PC-9 (cell line): ENCODE measurements at regions of chr3 and their contacts with region 1.

Region 1: DNA sequence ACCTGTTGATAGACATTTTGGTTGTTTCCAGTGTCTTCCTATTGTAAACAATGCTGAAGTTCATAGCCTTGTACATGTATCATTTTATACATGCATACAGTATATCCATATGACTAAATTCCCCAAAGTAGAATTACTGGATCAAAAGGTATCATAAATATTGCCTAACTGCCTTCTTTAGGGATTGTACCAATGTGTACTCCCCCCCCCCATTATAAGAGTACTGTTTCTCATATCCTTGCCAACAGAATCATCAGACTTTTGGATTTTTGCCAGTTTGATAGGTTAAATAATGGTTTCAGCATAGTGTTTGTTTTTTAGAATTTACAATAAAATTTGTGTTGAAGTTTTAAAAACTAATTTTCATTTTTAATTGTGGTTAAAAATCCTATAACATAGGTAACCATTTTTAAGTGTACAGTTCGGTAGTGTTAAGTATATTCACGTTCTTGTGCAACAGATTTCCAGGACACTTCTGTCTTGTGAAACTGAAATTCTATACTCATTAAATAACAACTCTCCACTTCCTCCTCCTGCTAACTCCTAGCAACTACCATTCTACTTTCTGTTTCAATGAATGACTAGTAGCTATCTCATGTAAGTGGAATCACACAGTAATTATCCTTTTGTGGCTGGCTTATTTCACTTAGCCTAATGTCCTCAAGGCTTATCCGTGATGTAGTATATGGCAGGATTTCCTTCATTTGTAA is 30.8 kb upstream of the MAP3K13 start:
- DNase-seq: peak in 1 of 2 experiments; percentile 99
- H3K4me3 ChIP-seq: peak overlapping the region; percentile 21; the same call in 1 of the 2 replicates
- H3K27ac ChIP-seq: peak overlapping the region; percentile 88
- H3K4me1 ChIP-seq: peaks cover 47% of the 10 kb centered on the region
- H3K27me3 ChIP-seq: no peaks in the 10 kb centered on the region
- CTCF ChIP-seq: no peak

Region 2: DNA sequence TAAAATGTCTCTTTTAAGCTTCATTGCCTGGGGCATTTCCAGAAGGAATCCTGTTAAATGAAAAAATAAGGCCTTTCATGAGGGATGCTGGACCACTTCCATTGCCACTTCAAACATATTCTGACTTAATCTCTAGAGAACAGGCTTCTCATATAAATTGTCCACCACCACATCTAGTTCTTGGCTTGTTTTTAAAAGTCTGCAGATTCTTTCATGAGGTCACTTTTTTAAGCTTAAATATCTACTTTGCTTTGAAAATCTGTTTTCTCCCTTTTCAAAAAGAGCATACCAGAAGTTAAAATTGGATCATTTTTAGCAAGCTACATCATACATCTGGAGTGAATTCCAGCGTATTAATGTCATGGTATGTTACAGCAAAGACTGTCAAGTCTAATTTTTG is 310.9 kb before region 1 on chr3:
- CTCF ChIA-PET with region 1: interaction called, 13 read pairs
- POLR2A ChIA-PET with region 1: no interaction called
- intact Hi-C with region 1: no loop called
- DNase-seq: no peak
- H3K4me3 ChIP-seq: no peak overlapping the region
- H3K27ac ChIP-seq: no peak overlapping the region
- H3K4me1 ChIP-seq: no peaks in the 10 kb centered on the region
- H3K27me3 ChIP-seq: no peaks in the 10 kb centered on the region
- CTCF ChIP-seq: no peak

Region 3: DNA sequence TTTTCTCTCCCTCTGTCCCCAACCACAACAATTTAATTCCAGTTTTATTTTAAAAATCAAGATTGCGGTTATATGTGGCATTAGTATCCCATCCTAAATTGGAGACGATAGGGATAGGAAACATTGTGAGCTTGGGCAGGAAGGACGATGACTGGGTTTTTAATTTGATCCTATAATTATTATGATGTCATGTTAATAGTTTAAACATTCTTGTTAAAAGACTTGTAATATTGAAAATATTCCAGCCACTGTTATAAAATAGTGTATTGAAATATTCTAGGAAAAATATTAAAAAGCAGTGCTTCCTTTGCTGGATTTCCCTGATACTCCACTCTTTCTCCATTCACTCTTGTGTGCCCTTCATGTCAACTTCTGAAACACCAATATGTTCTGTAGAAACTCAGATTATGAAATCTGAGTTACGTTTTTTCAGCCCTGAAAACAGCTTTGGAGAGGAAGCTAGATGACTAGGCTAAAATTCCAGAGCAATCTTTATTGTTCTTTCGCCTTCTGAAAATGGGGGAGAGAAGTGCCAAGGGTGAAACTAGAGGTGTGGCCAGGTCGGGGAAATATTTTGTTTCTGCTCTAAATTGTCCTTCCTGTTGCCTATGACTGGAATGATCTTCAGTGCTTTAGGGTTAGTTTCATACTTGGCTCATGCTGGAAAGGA is 15.3 kb before region 1 on chr3:
- CTCF ChIA-PET with region 1: interaction called, 4 read pairs
- POLR2A ChIA-PET with region 1: interaction called, 10 read pairs
- intact Hi-C with region 1: loop called (anchors 1 kb)
- DNase-seq: peak; percentile 64 to 96
- H3K4me3 ChIP-seq: peak overlapping the region; percentile 28
- H3K27ac ChIP-seq: peak overlapping the region; percentile 98
- H3K4me1 ChIP-seq: peaks cover 34% of the 10 kb centered on the region
- H3K27me3 ChIP-seq: no peaks in the 10 kb centered on the region
- CTCF ChIP-seq: no peak

Region 4: DNA sequence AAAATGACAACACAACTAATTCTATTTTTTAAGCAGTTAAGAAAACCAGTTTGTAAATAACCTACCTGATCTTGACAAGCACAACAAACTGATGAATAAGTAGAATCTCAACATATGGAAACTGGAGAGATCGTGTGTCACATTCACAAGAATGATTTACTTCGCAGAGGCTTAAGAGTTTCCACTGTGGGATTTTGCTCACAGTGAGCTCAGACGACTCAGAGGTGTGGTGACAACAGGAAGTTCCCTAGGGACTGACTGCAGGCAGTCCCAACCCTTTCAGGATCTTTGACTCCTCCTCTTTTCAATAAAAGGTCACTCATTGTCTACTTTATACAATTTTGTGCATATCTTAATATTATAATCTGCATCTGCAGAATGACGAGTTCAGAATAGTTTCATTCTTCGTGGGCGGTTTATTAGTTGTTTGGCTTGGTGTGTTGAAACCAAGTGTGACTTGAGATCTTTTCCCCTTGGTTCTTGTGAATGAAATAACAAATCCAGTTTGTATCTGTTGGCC is 220.2 kb after region 1 on chr3 and contains the start of gene LIPH:
- CTCF ChIA-PET with region 1: no interaction called
- POLR2A ChIA-PET with region 1: no interaction called
- intact Hi-C with region 1: loop called (anchors 5 kb)
- DNase-seq: peak; percentile 61 to 96
- H3K4me3 ChIP-seq: peak within 1 kb of the TSS; percentile 61
- H3K27ac ChIP-seq: peak within 1 kb of the TSS; percentile 93
- H3K4me1 ChIP-seq: peaks cover 81% of the 10 kb centered on the region
- H3K27me3 ChIP-seq: no peaks in the 10 kb centered on the region
- CTCF ChIP-seq: no peak
- total RNA-seq, gene LIPH: 38.4 and 44.7 TPM in 2 replicates

Region 5: DNA sequence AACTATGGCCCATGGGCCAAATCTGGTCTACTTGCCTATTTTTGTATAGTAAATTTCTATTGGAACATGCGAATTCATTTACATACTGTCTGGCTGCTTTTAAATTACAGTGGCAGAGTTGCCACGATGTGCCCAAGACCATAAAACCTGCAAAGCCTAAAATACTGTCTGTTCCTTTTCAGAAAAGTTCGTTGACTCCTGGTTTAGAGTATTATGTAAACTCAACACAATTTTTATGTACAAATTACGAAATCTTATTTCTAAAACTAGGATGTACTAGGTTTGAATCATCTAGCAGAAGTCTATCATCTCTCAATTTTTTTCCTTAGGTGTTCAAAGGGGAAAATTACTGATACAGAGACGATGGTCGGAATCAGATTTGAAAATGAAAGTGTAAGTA is 280.8 kb after region 1 on chr3:
- CTCF ChIA-PET with region 1: no interaction called
- POLR2A ChIA-PET with region 1: interaction called, 10 read pairs
- intact Hi-C with region 1: no loop called
- DNase-seq: no peak
- H3K4me3 ChIP-seq: no peak overlapping the region
- H3K27ac ChIP-seq: no peak overlapping the region
- H3K4me1 ChIP-seq: no peaks in the 10 kb centered on the region
- H3K27me3 ChIP-seq: no peaks in the 10 kb centered on the region
- CTCF ChIP-seq: no peak